ENCODE measurements at regions of chr11 and their contacts with region 1.

Region 1: GRCh38 chr11:82900277-82901164 is at the start of gene PRCP:
- DNase-seq: peak; percentile 97
- H3K4me3 Mint-ChIP-seq: peak within 1 kb of the TSS; percentile 99
- H3K27ac Mint-ChIP-seq: peak within 1 kb of the TSS; percentile 99
- H3K4me1 Mint-ChIP-seq: peaks cover 48% of the 10 kb centered on the region
- H3K27me3 Mint-ChIP-seq: no peaks in the 10 kb centered on the region
- total RNA-seq, gene PRCP: 23.0 to 23.3 TPM

Region 2: DNA sequence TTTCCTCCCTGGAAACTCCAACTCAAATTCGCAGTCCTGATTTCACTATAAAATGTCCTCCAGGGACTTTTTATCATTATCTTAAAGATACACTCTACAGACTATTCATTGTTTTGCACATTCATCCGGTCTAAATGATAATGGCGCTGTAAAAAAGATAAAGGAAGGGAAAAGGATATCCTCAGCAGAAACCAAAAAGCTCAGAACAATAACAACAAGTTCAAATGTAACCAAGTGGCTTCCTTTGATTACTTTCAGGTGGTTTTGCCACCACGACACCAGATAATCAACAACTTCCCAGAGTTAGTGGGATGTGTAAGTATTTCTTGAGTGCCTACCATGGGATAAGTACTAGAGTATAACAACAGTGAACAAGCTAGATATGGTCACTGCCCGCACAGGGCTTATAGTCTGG is 26.6 kb before region 1 on chr11:
- CTCF ChIA-PET with region 1: interaction called, 57 read pairs
- intact Hi-C with region 1: loop called (anchors 1 kb)
- DNase-seq: no peak
- H3K4me3 Mint-ChIP-seq: no peak overlapping the region
- H3K27ac Mint-ChIP-seq: peak overlapping the region; percentile 59
- H3K4me1 Mint-ChIP-seq: peaks cover 30% of the 10 kb centered on the region
- H3K27me3 Mint-ChIP-seq: no peaks in the 10 kb centered on the region

Region 3: GRCh38 chr11:82978422-82979099 is 78.0 kb after region 1 on chr11:
- CTCF ChIA-PET with region 1: interaction called, 3 read pairs
- intact Hi-C with region 1: loop called (anchors 1 kb)
- DNase-seq: no peak
- H3K4me3 Mint-ChIP-seq: peak overlapping the region; percentile 0
- H3K27ac Mint-ChIP-seq: peak overlapping the region; percentile 33
- H3K4me1 Mint-ChIP-seq: peaks cover 51% of the 10 kb centered on the region
- H3K27me3 Mint-ChIP-seq: no peaks in the 10 kb centered on the region

Region 4: GRCh38 chr11:83071567-83072349 is 171.2 kb after region 1 on chr11 and contains the start of gene RAB30:
- CTCF ChIA-PET with region 1: interaction called, 8 read pairs
- intact Hi-C with region 1: loop called (anchors 1 kb)
- DNase-seq: peak; percentile 97
- H3K4me3 Mint-ChIP-seq: no peak within 1 kb of the TSS
- H3K27ac Mint-ChIP-seq: no peak within 1 kb of the TSS
- H3K4me1 Mint-ChIP-seq: peaks cover 54% of the 10 kb centered on the region
- H3K27me3 Mint-ChIP-seq: no peaks in the 10 kb centered on the region
- total RNA-seq, gene RAB30: 8.8 to 11.1 TPM

Region 5: GRCh38 chr11:83272627-83273026 is 372.1 kb after region 1 on chr11:
- CTCF ChIA-PET with region 1: no interaction called
- intact Hi-C with region 1: no loop called
- DNase-seq: no peak
- H3K4me3 Mint-ChIP-seq: no peak overlapping the region
- H3K27ac Mint-ChIP-seq: no peak overlapping the region
- H3K4me1 Mint-ChIP-seq: peaks cover 15% of the 10 kb centered on the region
- H3K27me3 Mint-ChIP-seq: no peaks in the 10 kb centered on the region

Region 6: GRCh38 chr11:83285771-83286528 is 385.4 kb after region 1 on chr11 and contains the start of gene CCDC90B:
- CTCF ChIA-PET with region 1: no interaction called
- intact Hi-C with region 1: loop called (anchors 1 kb)
- DNase-seq: peak; percentile 97
- H3K4me3 Mint-ChIP-seq: peak within 1 kb of the TSS; percentile 97
- H3K27ac Mint-ChIP-seq: peak within 1 kb of the TSS; percentile 98
- H3K4me1 Mint-ChIP-seq: peaks cover 28% of the 10 kb centered on the region
- H3K27me3 Mint-ChIP-seq: no peaks in the 10 kb centered on the region
- total RNA-seq, gene CCDC90B: 28.2 to 29.5 TPM